ENCODE measurements at regions of chr3 and their contacts with region 1.

Region 1: DNA sequence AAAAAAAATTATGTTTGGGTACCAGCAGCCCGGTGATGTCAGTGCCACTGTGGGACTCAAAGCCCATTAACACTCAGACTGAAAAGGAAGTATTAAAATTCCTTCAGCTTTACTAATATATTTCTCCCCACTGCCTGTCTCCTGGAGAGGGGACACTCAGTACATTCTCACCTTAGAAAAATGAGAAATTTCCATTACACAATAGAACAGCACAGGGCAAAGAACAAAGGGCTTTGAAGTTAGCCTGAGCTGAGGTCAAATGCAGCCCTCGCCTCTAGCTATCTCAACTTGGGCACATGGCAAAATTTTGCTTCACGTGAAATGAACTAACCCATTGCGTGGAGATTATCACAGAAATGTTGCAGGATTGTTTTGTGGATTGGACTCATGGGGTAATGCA is 80.8 kb downstream of the RARB start:
- DNase-seq: peak; percentile 94
- H3K4me3 ChIP-seq: no peak overlapping the region
- H3K27ac ChIP-seq: peak overlapping the region; percentile 98
- H3K4me1 ChIP-seq: peaks cover 28% of the 10 kb centered on the region
- H3K27me3 ChIP-seq: no peaks in the 10 kb centered on the region
- CTCF ChIP-seq: no peak
- POLR2A ChIP-seq: no peak

Region 2: DNA sequence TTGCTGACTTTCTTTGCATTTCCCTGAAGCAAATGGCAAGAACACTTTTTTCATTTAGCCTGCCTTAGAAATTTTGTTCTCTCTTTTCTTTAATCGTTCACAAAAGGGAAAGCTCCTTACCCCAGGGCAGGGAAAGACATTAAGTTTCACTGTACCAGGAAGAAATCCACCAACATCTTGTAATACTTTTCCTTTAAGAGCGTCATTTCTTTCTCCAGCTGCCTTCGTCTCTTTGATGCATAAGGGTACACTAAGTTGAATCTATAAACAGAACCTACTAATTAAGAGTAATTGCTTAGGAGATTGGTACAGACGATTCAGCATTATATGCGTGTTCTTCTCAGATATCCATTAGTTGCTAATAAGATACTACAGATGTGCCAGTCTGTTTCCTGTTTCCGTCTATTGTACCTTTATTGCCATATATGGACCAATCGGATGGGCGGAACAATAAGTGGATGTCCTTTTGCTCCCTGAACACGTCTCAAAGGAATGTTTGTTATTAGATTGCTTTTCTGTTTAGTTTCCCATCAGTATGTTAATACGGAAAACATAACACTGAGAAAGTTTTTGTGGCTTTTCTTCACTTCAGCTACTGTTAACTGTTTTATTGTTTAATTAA is 357.5 kb before region 1 on chr3:
- CTCF ChIA-PET with region 1: no interaction called
- POLR2A ChIA-PET with region 1: no interaction called
- dilution Hi-C with region 1: no loop called
- intact Hi-C with region 1: loop called (anchors 2 kb)
- DNase-seq: peak; percentile 88
- H3K4me3 ChIP-seq: peak overlapping the region in 2 of 3 experiments; percentile 1 to 49
- H3K27ac ChIP-seq: peak overlapping the region; percentile 81
- H3K4me1 ChIP-seq: peaks cover 25% of the 10 kb centered on the region
- H3K27me3 ChIP-seq: no peaks in the 10 kb centered on the region
- CTCF ChIP-seq: no peak
- POLR2A ChIP-seq: peak; percentile 21

Region 3: DNA sequence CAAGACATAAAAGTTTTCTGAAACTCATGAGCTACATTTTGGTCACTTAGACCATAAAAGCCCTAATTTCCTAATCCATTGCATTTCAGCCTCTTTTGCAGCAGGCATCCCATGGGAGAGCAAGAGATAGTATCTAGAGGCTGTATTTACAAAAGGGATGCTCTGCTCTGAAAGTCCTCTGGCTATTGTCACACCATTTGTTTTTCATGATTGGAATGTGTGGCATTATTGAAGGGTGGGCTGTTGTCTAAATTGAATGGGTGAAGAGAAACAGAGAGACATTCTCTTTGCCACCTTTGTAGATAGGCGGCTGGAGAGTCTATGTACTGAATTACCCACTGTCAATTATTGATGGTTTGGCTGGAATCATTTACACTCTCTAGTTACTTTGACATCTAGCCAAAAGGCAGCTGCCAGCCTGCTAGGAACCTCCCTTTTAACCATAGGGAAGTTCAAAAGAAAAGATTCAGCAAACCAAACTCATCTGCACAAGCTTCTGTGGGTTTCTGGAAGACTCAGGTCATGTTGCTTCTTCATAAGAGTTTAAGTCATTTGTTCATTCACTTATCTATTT is 170.7 kb before region 1 on chr3:
- CTCF ChIA-PET with region 1: no interaction called
- POLR2A ChIA-PET with region 1: no interaction called
- dilution Hi-C with region 1: no loop called
- intact Hi-C with region 1: no loop called
- DNase-seq: no peak
- H3K4me3 ChIP-seq: no peak overlapping the region
- H3K27ac ChIP-seq: no peak overlapping the region
- H3K4me1 ChIP-seq: no peaks in the 10 kb centered on the region
- H3K27me3 ChIP-seq: no peaks in the 10 kb centered on the region
- CTCF ChIP-seq: no peak
- POLR2A ChIP-seq: no peak

Region 4: GRCh38 chr3:25483456-25483855 is 25.4 kb before region 1 on chr3:
- CTCF ChIA-PET with region 1: no interaction called
- POLR2A ChIA-PET with region 1: no interaction called
- dilution Hi-C with region 1: no loop called
- intact Hi-C with region 1: loop called (anchors 1 kb)
- DNase-seq: peak; percentile 90
- H3K4me3 ChIP-seq: no peak overlapping the region
- H3K27ac ChIP-seq: peak overlapping the region; percentile 55
- H3K4me1 ChIP-seq: peaks cover 48% of the 10 kb centered on the region
- H3K27me3 ChIP-seq: no peaks in the 10 kb centered on the region
- CTCF ChIP-seq: no peak
- POLR2A ChIP-seq: no peak

Region 5: GRCh38 chr3:25493786-25494185 is 15.1 kb before region 1 on chr3:
- CTCF ChIA-PET with region 1: no interaction called
- POLR2A ChIA-PET with region 1: no interaction called
- dilution Hi-C with region 1: no loop called
- intact Hi-C with region 1: loop called (anchors 1 kb)
- DNase-seq: peak; percentile 75
- H3K4me3 ChIP-seq: no peak overlapping the region
- H3K27ac ChIP-seq: peak overlapping the region; percentile 83
- H3K4me1 ChIP-seq: peaks cover 24% of the 10 kb centered on the region
- H3K27me3 ChIP-seq: no peaks in the 10 kb centered on the region
- CTCF ChIP-seq: no peak
- POLR2A ChIP-seq: no peak

Region 6: GRCh38 chr3:27345492-27345891 is 1836.6 kb after region 1 on chr3:
- CTCF ChIA-PET with region 1: no interaction called
- POLR2A ChIA-PET with region 1: no interaction called
- dilution Hi-C with region 1: no loop called
- intact Hi-C with region 1: no loop called
- DNase-seq: no peak
- H3K4me3 ChIP-seq: no peak overlapping the region
- H3K27ac ChIP-seq: no peak overlapping the region
- H3K4me1 ChIP-seq: no peaks in the 10 kb centered on the region
- H3K27me3 ChIP-seq: no peaks in the 10 kb centered on the region
- CTCF ChIP-seq: no peak
- POLR2A ChIP-seq: no peak